Dorsolateral prefrontal cortex (tissue), 120 donors: ENCODE measurements at regions of chr6 and their contacts with region 1.

Region 1: GRCh38 chr6:20098267-20098876 is 113.9 kb downstream of the MBOAT1 start:
- DNase-seq: no peak
- H3K4me3 ChIP-seq: no peak overlapping the region
- H3K27ac ChIP-seq: no peak overlapping the region
- H3K27me3 ChIP-seq: no peaks in the 10 kb centered on the region
- CTCF ChIP-seq: no peak

Region 2: DNA sequence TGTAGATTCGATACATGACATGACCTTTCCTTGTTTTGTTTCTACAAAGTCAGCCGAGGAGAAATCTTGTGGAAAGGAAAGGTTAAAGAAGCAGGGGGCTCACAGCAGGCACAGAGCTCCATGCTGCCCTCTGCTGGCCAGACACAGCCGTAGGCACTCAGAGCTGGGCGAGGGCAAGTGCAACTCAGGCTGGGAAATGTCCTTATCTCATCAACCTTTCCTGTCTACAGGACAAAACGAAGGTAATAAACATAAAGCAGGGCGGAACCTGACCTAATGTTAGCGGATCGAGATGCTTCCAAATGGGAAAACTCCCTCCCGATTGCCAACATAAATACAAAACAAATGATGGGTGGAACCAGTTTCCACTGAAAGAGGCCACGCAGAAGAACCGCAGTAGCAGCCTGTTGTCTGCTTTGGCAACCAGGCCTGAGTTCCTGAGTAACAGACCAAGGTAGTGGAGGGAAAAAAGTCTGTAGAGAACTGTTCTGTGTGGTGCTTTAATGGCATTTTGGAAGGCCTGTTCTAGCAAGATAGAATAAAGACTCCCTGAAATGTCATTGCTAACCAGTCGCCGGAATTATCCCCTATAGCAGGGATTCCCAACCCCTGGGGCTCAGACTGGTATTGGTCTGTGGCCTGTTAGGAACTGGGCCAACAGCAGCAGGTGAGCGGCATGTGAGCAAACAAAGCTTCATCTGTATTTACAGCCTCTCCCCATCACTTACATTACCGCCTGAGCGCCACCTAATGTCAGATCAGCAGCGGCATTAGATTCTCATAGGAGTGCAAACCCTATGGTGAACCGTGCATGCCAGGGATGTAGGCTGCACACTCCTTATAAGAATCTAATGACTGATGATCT is 28.6 kb after region 1 on chr6:
- intact Hi-C with region 1: loop called (anchors 1 to 5 kb)
- DNase-seq: peak in 9 of 10 donors; percentile 10 to 66 (median 50)
- H3K4me3 ChIP-seq: peak overlapping the region in 2 of 59 donors; percentile 2 to 8
- H3K27ac ChIP-seq: peak overlapping the region in 1 of 59 donors; percentile 10
- H3K27me3 ChIP-seq: peaks cover 0 to 5% (median 0%) of the 10 kb centered on the region in 45 donors
- CTCF ChIP-seq: peak; percentile 39 to 95 (median 88)

Region 3: DNA sequence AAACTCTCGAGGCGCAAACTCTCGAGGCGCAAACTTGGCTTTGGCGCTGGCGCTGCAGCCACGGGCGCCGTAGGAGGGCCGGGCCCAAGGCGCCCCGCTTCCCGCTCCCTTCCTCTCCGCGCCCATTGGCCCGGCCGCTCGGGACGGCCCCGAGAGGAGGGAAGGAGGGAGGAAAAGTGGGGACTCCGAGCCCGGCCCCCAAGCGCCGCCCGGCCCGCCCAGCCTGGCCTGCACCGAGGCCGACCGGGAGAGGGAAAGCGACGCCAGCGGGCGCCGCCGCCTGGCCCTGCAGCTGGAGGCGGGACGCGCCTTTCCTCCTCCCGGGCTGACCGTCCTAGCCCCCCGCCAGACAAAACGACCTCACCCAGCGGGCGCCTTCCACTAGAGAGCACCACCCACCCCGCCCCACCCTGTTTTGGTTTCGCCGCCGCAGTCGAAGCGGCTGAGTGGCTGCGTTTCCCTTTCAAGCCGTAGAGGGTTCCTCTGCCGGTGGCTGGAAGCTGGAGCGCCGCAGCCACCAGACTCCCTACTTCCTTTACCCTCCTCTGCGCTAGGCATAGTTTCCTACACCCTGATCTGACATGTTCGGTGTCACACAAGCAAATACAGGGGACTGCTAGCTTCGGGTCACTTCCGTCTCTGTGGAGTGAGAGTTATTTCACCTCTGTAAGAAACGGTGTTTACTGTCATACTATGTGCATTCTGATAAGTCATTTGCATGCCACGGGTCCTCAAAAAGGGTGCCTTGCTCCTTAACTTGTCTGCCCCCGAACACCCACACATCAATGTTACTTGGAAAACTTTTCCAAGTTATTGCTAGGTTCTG is 114.2 kb after region 1 on chr6 and contains the start of gene MBOAT1:
- intact Hi-C with region 1: loop called (anchors 5 to 10 kb)
- DNase-seq: peak; percentile 14 to 84 (median 52)
- H3K4me3 ChIP-seq: peak within 1 kb of the TSS; percentile 53 to 83 (median 69)
- H3K27ac ChIP-seq: peak within 1 kb of the TSS in 51 of 59 donors; percentile 8 to 82 (median 60)
- H3K27me3 ChIP-seq: no peaks in the 10 kb centered on the region
- CTCF ChIP-seq: peak in 37 of 56 donors; percentile 2 to 54 (median 23)
- total RNA-seq, gene MBOAT1: 0.27 to 10.5 (median 1.4) TPM

Region 4: DNA sequence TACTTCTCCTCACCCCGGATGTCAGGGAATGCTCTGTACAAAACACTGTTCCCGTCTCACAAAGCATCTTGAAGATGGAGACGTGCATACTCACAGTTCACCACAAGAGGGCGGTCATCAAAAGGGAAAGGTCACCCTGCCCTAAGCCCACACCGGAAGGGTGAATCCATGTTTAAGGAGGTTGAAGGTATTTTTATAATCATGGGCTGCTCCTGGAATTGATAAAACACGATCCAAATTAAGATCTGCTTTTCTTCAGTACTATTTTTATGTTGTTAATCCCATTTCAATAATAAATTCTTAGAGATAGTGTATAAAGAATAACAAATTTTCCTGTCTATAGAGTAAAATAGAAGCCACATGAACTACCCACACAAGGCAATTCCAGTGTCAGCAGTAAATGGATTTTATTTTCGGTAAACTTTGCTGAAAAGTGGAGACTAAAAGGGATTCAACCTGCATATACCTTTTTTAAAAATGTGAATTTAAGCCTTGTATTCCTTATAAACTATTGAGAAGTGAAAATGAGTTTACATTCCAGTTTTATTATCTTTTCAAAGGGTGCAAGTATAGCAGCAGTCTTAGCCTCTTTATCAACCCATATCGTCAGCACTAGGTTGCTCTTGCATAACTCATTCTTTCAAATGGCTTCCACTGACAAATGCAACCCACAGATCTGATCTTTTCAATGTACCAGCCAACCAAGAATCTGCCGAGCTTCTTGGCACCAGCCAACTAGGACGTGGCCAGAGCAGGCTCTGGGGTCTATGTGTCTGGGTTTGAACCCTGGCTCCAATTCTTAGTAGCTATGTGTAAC is 193.6 kb after region 1 on chr6:
- intact Hi-C with region 1: loop called in 1 of 2 experiments (anchors 5 kb)
- DNase-seq: peak in 9 of 10 donors; percentile 34 to 84 (median 69)
- H3K4me3 ChIP-seq: peak overlapping the region in 6 of 59 donors; percentile 1 to 12 (median 6)
- H3K27ac ChIP-seq: no peak overlapping the region
- H3K27me3 ChIP-seq: no peaks in the 10 kb centered on the region
- CTCF ChIP-seq: peak; percentile 83 to 98 (median 95)

Region 5: DNA sequence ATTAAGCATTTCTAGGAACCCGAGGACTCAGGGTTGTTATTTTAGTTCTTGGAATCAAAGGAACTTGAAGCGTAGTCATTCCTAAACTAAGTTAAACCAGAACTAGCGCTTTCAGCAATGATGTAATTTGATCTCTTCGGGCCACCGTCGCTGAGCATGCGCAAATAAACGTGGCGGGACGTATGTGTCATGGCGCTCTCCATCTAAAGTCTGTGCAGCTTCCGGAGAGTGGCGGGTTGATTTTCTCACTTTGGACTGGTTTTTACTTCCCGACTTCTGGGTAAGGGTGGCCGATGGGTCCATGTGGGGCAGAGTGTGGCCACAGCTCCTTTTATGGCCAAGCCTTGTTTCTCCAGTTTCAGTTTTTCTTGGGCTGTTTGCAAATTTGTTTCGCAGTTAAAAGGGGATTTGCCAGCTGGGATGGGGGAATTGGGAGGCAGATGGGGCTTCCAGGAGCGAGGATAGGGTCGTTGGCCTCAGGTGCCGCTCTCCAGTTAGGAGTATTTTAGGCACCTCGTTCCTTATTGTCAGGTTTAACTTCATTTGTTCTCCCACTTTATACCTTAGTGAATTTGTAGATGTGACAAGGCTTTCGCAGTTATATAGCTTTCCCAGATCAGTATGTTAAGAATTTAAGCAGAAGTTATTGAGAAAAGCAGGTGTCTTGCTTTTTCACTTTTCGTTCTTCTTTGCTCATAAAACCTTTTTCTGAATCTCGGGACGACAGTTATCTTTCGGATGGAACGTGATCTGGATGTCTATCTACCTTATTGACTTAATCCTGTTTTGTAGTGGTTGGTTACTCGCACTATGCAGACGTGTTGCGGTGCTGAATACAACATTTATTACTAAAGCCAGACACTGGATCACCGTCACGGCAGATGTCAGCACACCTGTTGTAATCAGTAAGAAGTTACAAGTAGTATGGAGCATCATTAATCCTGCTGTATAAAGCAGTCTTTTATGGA is 436.2 kb after region 1 on chr6 and contains the start of gene CDKAL1:
- intact Hi-C with region 1: loop called in 1 of 2 experiments (anchors 5 kb)
- DNase-seq: peak; percentile 80 to 95 (median 90)
- H3K4me3 ChIP-seq: peak within 1 kb of the TSS; percentile 53 to 99 (median 85)
- H3K27ac ChIP-seq: peak within 1 kb of the TSS in 54 of 59 donors; percentile 12 to 92 (median 77)
- H3K27me3 ChIP-seq: peaks cover 0 to 3% (median 0%) of the 10 kb centered on the region in 45 donors
- CTCF ChIP-seq: peak in 45 of 56 donors; percentile 14 to 68 (median 38)
- total RNA-seq, gene CDKAL1: 11.4 to 19.5 (median 15.0) TPM